ENCODE measurements at regions of chr4 and their contacts with region 1.

Region 1: DNA sequence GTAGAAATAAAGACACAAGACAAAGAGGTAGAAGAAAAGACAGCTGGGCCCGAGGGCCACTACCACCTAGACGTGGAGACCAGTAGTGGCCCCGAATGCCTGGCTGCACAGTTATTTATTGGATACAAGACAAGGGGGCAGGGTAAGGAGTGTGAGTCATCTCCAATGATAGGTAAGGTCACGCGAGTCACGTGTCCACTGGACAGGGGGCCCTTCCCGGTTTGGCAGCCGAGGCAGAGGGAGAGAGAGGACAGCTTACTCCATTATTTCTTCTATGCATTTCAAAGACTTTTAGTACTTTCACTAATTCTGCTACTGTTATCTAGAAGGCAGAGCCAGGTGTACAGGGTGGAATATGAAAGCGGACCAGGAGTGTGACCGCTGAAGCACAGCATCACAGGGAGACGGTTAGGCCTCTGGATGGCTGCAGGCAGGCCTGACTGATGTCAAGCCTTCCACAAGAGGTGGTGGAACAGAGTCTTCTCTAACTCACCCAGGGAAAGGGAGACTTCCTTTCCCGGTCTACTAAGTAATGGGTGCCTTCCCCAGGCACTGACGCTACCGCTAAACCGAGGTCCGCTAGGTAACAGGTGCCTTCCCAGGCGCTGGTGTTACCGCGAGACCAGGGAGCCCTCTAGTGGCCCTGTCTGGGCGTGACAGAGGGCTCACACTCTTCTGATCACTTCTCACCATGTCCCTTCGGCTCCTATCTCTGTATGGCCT is 44.9 kb downstream of the ZBTB49 start:
- DNase-seq: peak; percentile 54 to 74 (median 64)
- ATAC-seq: peak; percentile 90
- H3K4me3 ChIP-seq: no peak overlapping the region
- H3K4me3 Mint-ChIP-seq: peak overlapping the region in 4 of 10 donors; percentile 33 to 60 (median 49)
- H3K27ac ChIP-seq: no peak overlapping the region
- H3K27ac Mint-ChIP-seq: peak overlapping the region in 3 of 9 donors; percentile 31 to 52 (median 52)
- H3K4me1 ChIP-seq: no peaks in the 10 kb centered on the region
- H3K4me1 Mint-ChIP-seq: peaks cover 0 to 11% (median 8%) of the 10 kb centered on the region in 7 donors
- H3K27me3 ChIP-seq: no peaks in the 10 kb centered on the region
- H3K27me3 Mint-ChIP-seq: no peaks in the 10 kb centered on the region

Region 2: GRCh38 chr4:4260253-4260652 is 74.7 kb before region 1 on chr4:
- CTCF ChIA-PET with region 1: interaction called, 8 read pairs
- POLR2A ChIA-PET with region 1: no interaction called
- intact Hi-C with region 1: loop called (anchors 1 kb)
- DNase-seq: peak in 7 of 9 donors; percentile 9 to 57 (median 44)
- ATAC-seq: peak; percentile 100
- H3K4me3 ChIP-seq: no peak overlapping the region
- H3K4me3 Mint-ChIP-seq: no peak overlapping the region
- H3K27ac ChIP-seq: no peak overlapping the region
- H3K27ac Mint-ChIP-seq: peak overlapping the region in 1 of 9 donors; percentile 51
- H3K4me1 ChIP-seq: peaks cover 0 to 8% of the 10 kb centered on the region in 2 donors
- H3K4me1 Mint-ChIP-seq: peaks cover 0 to 4% (median 0%) of the 10 kb centered on the region in 7 donors
- H3K27me3 ChIP-seq: no peaks in the 10 kb centered on the region
- H3K27me3 Mint-ChIP-seq: peaks cover 0 to 5% (median 0%) of the 10 kb centered on the region in 5 donors

Region 3: DNA sequence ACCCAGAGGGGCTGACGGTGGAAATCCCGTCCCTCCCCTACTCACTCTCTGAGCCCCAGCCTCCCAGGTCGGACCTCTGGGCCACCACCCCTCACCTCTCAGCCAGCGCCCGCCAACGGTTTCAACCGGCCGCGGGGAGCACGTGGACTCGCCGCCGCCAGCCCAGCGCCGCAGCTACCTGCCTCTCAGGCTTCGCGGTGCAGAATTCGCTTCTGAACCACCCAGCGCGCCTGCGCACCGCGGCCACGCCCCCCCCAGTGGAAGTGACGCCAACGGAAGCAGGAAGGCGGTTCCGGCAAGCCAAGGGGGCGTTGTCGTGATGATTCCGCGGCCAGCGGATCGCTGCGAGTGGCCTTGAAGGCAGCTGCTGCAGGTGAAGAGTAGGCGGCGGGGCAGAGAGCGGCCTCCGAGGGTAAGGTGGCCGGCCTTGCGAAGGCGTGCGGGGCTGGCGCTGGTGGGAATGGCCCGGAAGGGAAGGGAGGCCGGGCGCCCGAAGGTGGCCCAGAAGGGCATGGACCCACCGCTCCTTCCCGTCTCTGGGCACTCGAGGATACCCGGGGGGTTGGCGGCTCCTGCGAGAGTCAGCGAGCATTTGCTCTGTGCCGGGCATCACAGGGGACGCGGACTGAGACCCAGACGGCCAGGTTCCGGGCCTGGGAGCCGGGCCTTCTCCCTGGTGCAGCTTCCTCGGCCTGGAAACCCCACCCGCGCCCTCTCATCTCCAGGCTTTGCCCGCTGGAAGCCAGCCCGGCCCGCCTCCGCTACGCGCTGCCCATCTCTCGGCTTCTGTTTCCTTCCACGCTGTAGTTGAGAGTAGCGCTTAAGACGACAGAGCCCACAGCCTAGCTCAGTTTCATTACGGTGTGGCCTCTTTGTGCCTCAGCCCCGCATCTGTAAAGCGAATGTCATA is 44.8 kb before region 1 on chr4 and contains the starts of genes LYAR and ZBTB49:
- CTCF ChIA-PET with region 1: no interaction called
- POLR2A ChIA-PET with region 1: no interaction called
- intact Hi-C with region 1: loop called (anchors 1 kb)
- DNase-seq: peak; percentile 89 to 99 (median 96)
- ATAC-seq: peak; percentile 96
- H3K4me3 ChIP-seq: peak within 1 kb of the TSS; percentile 81
- H3K4me3 Mint-ChIP-seq: peak within 1 kb of the TSS; percentile 93 to 98 (median 96)
- H3K27ac ChIP-seq: peak within 1 kb of the TSS; percentile 79
- H3K27ac Mint-ChIP-seq: peak within 1 kb of the TSS; percentile 80 to 95 (median 92)
- H3K4me1 ChIP-seq: peaks cover 20 to 21% of the 10 kb centered on the region in 2 donors
- H3K4me1 Mint-ChIP-seq: peaks cover 40 to 77% (median 57%) of the 10 kb centered on the region in 7 donors
- H3K27me3 ChIP-seq: no peaks in the 10 kb centered on the region
- H3K27me3 Mint-ChIP-seq: no peaks in the 10 kb centered on the region
- total RNA-seq, gene LYAR: 11.1 to 27.4 (median 21.0) TPM
- total RNA-seq, gene ZBTB49: 6.3 to 16.1 (median 8.0) TPM

Region 4: DNA sequence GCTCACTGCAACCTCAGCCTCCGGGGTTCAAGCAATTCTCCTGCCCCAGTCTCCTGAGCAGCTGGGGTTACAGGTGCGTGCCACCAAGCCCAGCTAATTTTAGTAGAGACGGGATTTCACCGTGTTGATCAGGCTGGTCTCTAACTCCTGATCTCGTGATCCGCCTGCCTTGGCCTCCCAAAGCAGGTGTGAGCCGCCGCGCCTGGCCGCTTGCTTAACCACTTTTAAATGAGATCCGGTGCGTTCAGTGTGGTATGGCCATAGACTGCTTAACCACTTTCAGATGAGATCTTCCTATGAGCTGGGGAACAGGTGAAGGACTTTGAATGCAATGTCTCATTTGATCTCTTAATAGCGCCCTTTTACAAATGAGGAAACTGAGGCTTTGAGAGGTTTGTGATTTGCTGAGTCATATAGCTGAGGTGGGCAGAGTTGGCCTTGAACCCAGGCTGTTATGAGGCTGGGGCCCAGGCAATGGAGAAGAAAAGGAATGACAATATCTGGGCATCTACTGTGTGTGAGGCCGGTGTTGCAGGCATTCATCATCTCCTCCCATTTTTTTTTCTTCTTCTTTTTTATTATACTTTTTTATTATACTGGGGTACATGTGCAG is 10.1 kb after region 1 on chr4:
- CTCF ChIA-PET with region 1: interaction called, 5 read pairs
- POLR2A ChIA-PET with region 1: interaction called, 4 read pairs
- intact Hi-C with region 1: loop called in 1 of 2 experiments (anchors 1 kb)
- DNase-seq: no peak
- ATAC-seq: no peak
- H3K4me3 ChIP-seq: no peak overlapping the region
- H3K4me3 Mint-ChIP-seq: no peak overlapping the region
- H3K27ac ChIP-seq: no peak overlapping the region
- H3K27ac Mint-ChIP-seq: peak overlapping the region in 6 of 9 donors; percentile 8 to 70 (median 14)
- H3K4me1 ChIP-seq: peaks cover 5 to 13% of the 10 kb centered on the region in 2 donors
- H3K4me1 Mint-ChIP-seq: peaks cover 11 to 56% (median 29%) of the 10 kb centered on the region in 7 donors
- H3K27me3 ChIP-seq: no peaks in the 10 kb centered on the region
- H3K27me3 Mint-ChIP-seq: no peaks in the 10 kb centered on the region

Region 5: GRCh38 chr4:4430492-4431197 is 95.7 kb after region 1 on chr4:
- CTCF ChIA-PET with region 1: interaction called, 3 read pairs
- POLR2A ChIA-PET with region 1: no interaction called
- intact Hi-C with region 1: loop called in 1 of 2 experiments (anchors 1 kb)
- DNase-seq: peak in 8 of 9 donors; percentile 11 to 53 (median 35)
- ATAC-seq: peak; percentile 87
- H3K4me3 ChIP-seq: no peak overlapping the region
- H3K4me3 Mint-ChIP-seq: no peak overlapping the region
- H3K27ac ChIP-seq: no peak overlapping the region
- H3K27ac Mint-ChIP-seq: no peak overlapping the region
- H3K4me1 ChIP-seq: no peaks in the 10 kb centered on the region
- H3K4me1 Mint-ChIP-seq: peaks cover 0 to 6% (median 3%) of the 10 kb centered on the region in 7 donors
- H3K27me3 ChIP-seq: no peaks in the 10 kb centered on the region
- H3K27me3 Mint-ChIP-seq: no peaks in the 10 kb centered on the region